ENCODE measurements at regions of chr10 and their contacts with region 1.

Region 1: GRCh38 chr10:35058134-35058533 is 32.0 kb downstream of the CUL2 start:
- DNase-seq: peak; percentile 85
- H3K4me3 ChIP-seq: peak overlapping the region in 1 of 3 experiments; percentile 16
- H3K27ac ChIP-seq: peak overlapping the region; percentile 97
- H3K4me1 ChIP-seq: peaks cover 43% of the 10 kb centered on the region
- H3K27me3 ChIP-seq: no peaks in the 10 kb centered on the region
- CTCF ChIP-seq: no peak
- POLR2A ChIP-seq: peak; percentile 47

Region 2: DNA sequence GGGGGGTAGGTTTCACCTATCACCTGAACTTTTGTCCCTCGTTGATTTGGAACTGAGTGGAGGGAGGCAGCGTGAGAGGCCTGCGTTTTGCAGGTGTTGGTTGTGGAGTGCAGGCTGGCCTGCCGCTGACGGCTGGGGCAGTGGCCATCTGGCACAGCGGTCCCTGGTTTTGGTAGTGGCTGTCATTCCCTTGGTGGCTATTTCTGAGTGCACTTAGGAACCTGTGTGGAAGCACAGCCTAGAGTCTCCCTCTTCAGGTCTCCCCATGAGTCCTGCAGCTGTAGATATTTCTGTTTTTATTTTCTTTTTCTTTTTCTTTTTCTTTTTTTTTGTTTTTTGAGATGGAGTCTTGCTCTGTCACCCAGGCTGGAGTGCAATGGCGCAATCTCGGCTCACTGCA is 97.2 kb before region 1 on chr10:
- CTCF ChIA-PET with region 1: no interaction called
- POLR2A ChIA-PET with region 1: no interaction called
- dilution Hi-C with region 1: no loop called
- intact Hi-C with region 1: no loop called
- DNase-seq: no peak
- H3K4me3 ChIP-seq: no peak overlapping the region
- H3K27ac ChIP-seq: no peak overlapping the region
- H3K4me1 ChIP-seq: no peaks in the 10 kb centered on the region
- H3K27me3 ChIP-seq: no peaks in the 10 kb centered on the region
- CTCF ChIP-seq: no peak
- POLR2A ChIP-seq: no peak

Region 3: GRCh38 chr10:35040760-35041501 is 17.2 kb before region 1 on chr10:
- CTCF ChIA-PET with region 1: interaction called, 10 read pairs
- POLR2A ChIA-PET with region 1: no interaction called
- dilution Hi-C with region 1: no loop called
- intact Hi-C with region 1: loop called (anchors 2 kb)
- DNase-seq: peak; percentile 74
- H3K4me3 ChIP-seq: no peak overlapping the region
- H3K27ac ChIP-seq: no peak overlapping the region
- H3K4me1 ChIP-seq: peaks cover 16% of the 10 kb centered on the region
- H3K27me3 ChIP-seq: no peaks in the 10 kb centered on the region
- CTCF ChIP-seq: no peak
- POLR2A ChIP-seq: no peak

Region 4: GRCh38 chr10:35090162-35090954 is 32.2 kb after region 1 on chr10 and contains the start of gene CUL2:
- CTCF ChIA-PET with region 1: interaction called, 4 read pairs
- POLR2A ChIA-PET with region 1: no interaction called
- dilution Hi-C with region 1: no loop called
- intact Hi-C with region 1: loop called (anchors 1 kb)
- DNase-seq: peak; percentile 95
- H3K4me3 ChIP-seq: peak within 1 kb of the TSS; percentile 75 to 98 (median 93)
- H3K27ac ChIP-seq: peak within 1 kb of the TSS; percentile 71
- H3K4me1 ChIP-seq: peaks cover 13% of the 10 kb centered on the region
- H3K27me3 ChIP-seq: no peaks in the 10 kb centered on the region
- CTCF ChIP-seq: no peak
- POLR2A ChIP-seq: peak; percentile 50
- total RNA-seq, gene CUL2: 45.3 and 47.5 TPM in 2 replicates

Measured in endothelial cell of umbilical vein (primary cell).